Aorta (tissue), 5 donors: ENCODE measurements at regions of chr2 and their contacts with region 1.

Region 1: DNA sequence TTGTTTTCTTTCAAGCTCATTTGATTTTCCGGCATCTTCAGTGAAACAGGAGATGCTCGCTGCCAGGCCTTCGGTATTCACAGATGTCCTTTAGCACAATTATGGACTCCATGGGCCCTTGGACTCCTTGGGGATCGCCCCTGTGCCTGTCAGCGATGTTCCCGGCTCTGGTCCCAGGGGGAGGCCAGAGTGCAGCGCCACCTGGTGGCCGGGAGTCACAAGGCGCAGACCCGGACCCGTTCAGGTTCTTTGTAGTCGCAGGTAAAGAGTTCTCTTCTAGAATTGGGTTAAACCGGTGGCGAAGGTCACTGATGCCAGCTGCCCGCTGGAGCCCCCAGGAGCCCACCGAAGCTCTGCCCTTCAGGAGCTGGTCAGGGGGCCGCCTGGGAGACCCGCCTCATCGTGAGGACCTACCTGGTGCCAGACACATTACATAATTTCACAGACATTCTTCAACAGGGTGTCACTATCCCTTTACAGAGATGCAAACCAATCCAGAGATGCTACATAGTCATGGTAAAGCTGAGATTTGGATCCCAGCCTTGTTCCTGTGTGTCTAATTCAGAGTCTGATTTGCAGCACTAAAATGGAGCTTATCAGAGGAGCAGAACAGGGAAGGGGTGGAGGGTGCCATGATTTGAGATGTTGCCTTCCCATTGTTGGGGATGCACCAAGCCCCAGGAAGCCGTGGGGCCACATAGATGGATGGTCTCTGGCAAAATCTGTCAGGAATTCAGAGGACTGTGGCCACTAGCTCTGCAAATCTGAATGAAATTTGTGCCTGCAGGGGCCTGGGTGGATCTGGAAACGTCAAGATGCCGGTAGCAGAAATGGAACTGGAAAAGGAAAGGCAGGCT is 6.0 kb upstream of the INPP5D start:
- DNase-seq: peak; percentile 65 to 88
- ATAC-seq: no peak
- H3K4me3 ChIP-seq: no peak overlapping the region
- H3K27ac ChIP-seq: no peak overlapping the region
- H3K4me1 ChIP-seq: no peaks in the 10 kb centered on the region
- H3K27me3 ChIP-seq: no peaks in the 10 kb centered on the region

Region 2: DNA sequence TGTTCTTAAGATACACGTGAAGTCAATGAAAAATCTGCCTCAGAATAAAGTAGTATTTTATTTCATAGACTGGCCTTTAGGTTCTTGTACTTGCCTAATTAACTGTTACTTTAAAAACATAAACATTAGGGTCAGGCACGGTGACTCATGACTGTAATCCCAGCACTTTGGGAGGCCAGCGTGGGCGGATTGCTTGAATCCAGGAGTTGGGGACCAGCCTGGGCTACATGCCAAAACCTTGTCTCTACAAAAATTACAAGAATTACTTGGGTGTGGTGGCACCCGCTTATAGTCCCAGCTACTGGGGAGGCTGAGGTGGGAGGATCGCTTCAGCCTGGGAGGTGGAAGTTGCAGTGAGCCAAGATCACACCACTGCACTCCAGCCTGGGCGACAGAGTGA is 200.1 kb before region 1 on chr2:
- intact Hi-C with region 1: loop called (anchors 2 to 5 kb)
- DNase-seq: no peak
- ATAC-seq: no peak
- H3K4me3 ChIP-seq: no peak overlapping the region
- H3K27ac ChIP-seq: no peak overlapping the region
- H3K4me1 ChIP-seq: no peaks in the 10 kb centered on the region
- H3K27me3 ChIP-seq: no peaks in the 10 kb centered on the region

Region 3: DNA sequence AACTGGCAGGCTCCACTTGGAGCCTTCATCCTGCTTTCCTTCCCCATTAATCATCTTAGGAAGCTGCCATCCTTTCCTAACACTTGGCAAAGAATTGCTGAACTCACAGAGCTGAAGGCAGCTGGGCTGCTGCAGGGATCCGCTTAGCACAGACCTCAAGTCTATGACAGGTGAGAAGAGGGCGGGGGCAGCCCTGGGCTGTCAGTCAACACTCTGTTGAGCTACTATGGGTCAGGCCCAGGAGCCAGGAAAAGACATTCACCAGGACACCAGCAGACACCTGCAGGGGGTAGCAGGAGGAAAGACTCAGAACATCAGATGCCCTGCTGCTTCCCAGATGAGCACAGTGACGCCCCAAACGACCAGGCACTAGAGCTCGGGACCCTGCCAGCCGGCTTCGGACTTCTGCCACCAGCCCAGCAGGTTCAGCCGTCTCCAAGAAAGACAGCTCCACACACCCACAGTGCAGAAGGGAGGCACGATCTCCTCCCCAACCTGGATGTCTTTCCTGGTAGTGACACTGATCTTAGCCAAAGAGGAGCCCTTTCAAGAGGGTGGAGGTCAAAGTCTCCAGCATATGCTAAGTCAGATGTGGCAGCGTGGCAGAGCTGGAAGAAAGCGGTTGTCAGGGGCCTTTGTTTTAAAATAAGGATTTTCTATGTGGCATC is 128.9 kb before region 1 on chr2:
- intact Hi-C with region 1: no loop called
- DNase-seq: no peak
- ATAC-seq: no peak
- H3K4me3 ChIP-seq: no peak overlapping the region
- H3K27ac ChIP-seq: no peak overlapping the region
- H3K4me1 ChIP-seq: no peaks in the 10 kb centered on the region
- H3K27me3 ChIP-seq: no peaks in the 10 kb centered on the region

Region 4: DNA sequence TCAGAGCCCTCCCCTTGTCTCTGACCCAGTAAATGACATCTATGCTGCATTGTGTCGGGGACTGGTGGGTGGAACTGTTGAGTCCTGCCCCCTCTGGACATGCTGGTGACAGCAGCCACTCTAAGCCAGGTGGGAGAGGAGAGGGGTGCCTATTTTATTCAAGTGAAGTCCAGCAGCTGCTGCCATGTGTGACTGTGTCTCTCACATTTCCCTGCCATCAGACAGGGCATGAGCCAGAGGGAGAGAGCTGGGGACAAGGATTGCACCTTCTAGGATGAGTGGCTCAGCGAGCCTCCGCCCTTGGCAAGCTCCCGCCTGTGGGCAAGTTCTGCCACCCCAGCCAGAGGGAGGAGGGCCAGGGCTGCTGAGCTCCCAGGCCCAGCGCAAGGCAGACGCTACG is 54.8 kb before region 1 on chr2:
- intact Hi-C with region 1: no loop called
- DNase-seq: peak in 1 of 2 donors; percentile 60
- ATAC-seq: no peak
- H3K4me3 ChIP-seq: no peak overlapping the region
- H3K27ac ChIP-seq: no peak overlapping the region
- H3K4me1 ChIP-seq: no peaks in the 10 kb centered on the region
- H3K27me3 ChIP-seq: no peaks in the 10 kb centered on the region

Region 5: DNA sequence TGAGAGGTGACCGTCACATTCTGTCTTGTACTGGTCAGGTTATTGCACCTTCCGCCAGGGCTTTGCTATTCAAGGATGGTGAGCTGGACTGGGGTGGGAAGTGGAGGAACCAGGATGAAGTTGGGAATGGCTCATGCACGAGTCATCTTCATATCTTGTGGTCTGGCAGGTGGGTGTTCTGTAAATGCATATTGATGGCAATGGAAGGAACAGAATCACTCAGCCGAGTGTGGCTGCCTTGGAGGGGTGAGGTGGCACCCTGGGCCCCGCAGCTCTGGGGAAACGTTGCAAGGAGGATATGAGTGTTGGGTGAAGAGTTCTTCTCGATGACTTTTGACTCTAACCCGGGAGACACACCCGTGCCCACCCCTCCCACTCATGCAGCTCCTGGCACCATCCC is 20.5 kb before region 1 on chr2:
- intact Hi-C with region 1: no loop called
- DNase-seq: peak in 1 of 2 donors; percentile 52
- ATAC-seq: no peak
- H3K4me3 ChIP-seq: no peak overlapping the region
- H3K27ac ChIP-seq: no peak overlapping the region
- H3K4me1 ChIP-seq: no peaks in the 10 kb centered on the region
- H3K27me3 ChIP-seq: no peaks in the 10 kb centered on the region

Region 6: DNA sequence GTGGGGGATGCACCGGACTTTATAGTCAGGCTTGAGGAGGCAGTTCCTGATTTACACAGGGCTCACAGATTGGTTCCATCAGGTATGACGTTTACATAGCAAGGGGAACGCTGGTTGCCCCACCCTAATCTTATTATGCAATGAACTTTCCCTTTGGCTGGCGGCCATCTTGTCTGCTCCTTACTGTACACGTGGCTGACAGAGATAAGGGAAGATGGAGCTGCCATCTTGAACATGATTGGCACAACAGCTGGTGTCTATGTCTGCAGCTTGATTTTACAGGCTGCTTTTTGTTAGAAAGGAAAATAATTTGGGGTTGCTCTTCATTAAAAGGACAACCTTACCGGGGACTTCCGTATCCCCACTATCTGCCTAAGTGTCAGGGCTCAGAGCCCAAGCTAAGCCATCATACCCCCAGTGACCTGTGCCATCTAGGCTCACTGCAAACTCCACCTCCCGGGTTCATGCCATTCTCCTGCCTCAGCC is 163.8 kb after region 1 on chr2:
- intact Hi-C with region 1: no loop called
- DNase-seq: no peak
- ATAC-seq: no peak
- H3K4me3 ChIP-seq: no peak overlapping the region
- H3K27ac ChIP-seq: no peak overlapping the region
- H3K4me1 ChIP-seq: no peaks in the 10 kb centered on the region
- H3K27me3 ChIP-seq: no peaks in the 10 kb centered on the region